ENCODE measurements at regions of chr15 and their contacts with region 1.

Region 1: GRCh38 chr15:58770857-58771620 is at the start of gene MINDY2:
- DNase-seq: peak; percentile 97
- ATAC-seq: peak; percentile 94
- H3K4me3 Mint-ChIP-seq: no peak within 1 kb of the TSS; the same call in 1 of the 2 replicates
- H3K27ac Mint-ChIP-seq: peak within 1 kb of the TSS; percentile 98
- H3K4me1 Mint-ChIP-seq: peaks cover 16% of the 10 kb centered on the region
- H3K27me3 Mint-ChIP-seq: no peaks in the 10 kb centered on the region
- CTCF ChIP-seq: no peak
- total RNA-seq, gene MINDY2: 27.0 to 29.9 TPM (median 29.6 TPM) in 3 replicates

Region 2: GRCh38 chr15:58227706-58228543 is 543.1 kb before region 1 on chr15:
- CTCF ChIA-PET with region 1: interaction called, 12 read pairs
- POLR2A ChIA-PET with region 1: no interaction called
- DNase-seq: peak; percentile 77
- ATAC-seq: peak; percentile 40; the same call in 1 of the 2 replicates
- H3K4me3 Mint-ChIP-seq: no peak overlapping the region
- H3K27ac Mint-ChIP-seq: no peak overlapping the region
- H3K4me1 Mint-ChIP-seq: peaks cover 45% of the 10 kb centered on the region
- H3K27me3 Mint-ChIP-seq: peaks cover 14% of the 10 kb centered on the region
- CTCF ChIP-seq: peak; percentile 78

Region 3: DNA sequence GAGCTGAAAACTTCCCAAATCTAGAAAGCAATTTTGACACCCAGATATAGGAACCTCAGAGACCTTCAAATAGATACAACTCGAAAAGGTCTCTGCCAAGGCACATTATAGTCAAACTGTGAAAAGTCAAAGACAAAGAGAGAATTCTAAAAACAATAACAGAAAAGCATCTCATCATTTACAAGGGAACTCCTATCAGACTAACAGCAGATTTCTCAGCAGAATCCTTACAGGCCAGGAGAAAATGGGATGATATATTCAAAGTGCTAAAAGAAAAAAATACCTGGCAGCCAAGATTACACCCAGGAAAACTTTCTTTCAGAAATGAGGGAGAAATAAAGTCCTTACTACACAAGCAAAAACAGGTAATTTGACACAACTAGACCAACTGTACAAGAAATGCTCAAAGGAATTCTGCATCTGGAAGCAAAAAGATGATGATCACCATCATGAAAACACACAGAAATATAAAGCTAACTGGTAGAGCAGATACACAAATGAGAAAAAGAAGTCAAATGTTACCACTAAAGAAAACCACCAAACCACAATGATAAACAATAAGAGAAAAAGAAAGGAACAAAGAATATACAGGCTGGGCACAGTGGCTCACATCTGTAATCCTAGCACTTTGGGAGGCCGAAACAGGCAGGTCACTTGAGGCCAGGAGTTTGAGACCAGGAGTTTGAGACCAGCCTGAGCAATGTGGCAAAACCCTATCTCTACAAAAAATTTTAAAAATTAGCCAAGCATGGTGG is 72.0 kb before region 1 on chr15:
- CTCF ChIA-PET with region 1: no interaction called
- POLR2A ChIA-PET with region 1: no interaction called
- DNase-seq: no peak
- ATAC-seq: no peak
- H3K4me3 Mint-ChIP-seq: no peak overlapping the region
- H3K27ac Mint-ChIP-seq: peak overlapping the region; percentile 37; the same call in 1 of the 2 replicates
- H3K4me1 Mint-ChIP-seq: peaks cover 31% of the 10 kb centered on the region
- H3K27me3 Mint-ChIP-seq: no peaks in the 10 kb centered on the region
- CTCF ChIP-seq: no peak

Region 4: GRCh38 chr15:58749532-58750337 is 21.3 kb before region 1 on chr15 and contains the start of gene ADAM10:
- CTCF ChIA-PET with region 1: interaction called, 20 read pairs
- POLR2A ChIA-PET with region 1: interaction called, 66 read pairs
- DNase-seq: peak; percentile 99
- ATAC-seq: peak; percentile 94
- H3K4me3 Mint-ChIP-seq: peak within 1 kb of the TSS; percentile 99
- H3K27ac Mint-ChIP-seq: peak within 1 kb of the TSS; percentile 98
- H3K4me1 Mint-ChIP-seq: peaks cover 31% of the 10 kb centered on the region
- H3K27me3 Mint-ChIP-seq: no peaks in the 10 kb centered on the region
- CTCF ChIP-seq: no peak
- total RNA-seq, gene ADAM10: 128 to 133 TPM (median 130 TPM) in 3 replicates

Region 5: GRCh38 chr15:58761010-58761388 is 10.0 kb before region 1 on chr15:
- CTCF ChIA-PET with region 1: interaction called, 12 read pairs
- POLR2A ChIA-PET with region 1: interaction called, 7 read pairs
- DNase-seq: no peak
- ATAC-seq: no peak
- H3K4me3 Mint-ChIP-seq: no peak overlapping the region
- H3K27ac Mint-ChIP-seq: no peak overlapping the region
- H3K4me1 Mint-ChIP-seq: 0 out of 2 replicates have a peak, but pooled peaks cover 2% of the 10 kb centered on the region
- H3K27me3 Mint-ChIP-seq: no peaks in the 10 kb centered on the region; the same call in 1 of the 2 replicates
- CTCF ChIP-seq: no peak

Region 6: GRCh38 chr15:58864602-58865424 is 93.8 kb after region 1 on chr15:
- CTCF ChIA-PET with region 1: interaction called, 17 read pairs
- POLR2A ChIA-PET with region 1: interaction called, 7 read pairs
- DNase-seq: peak; percentile 64
- ATAC-seq: peak; percentile 66
- H3K4me3 Mint-ChIP-seq: peak overlapping the region; percentile 61
- H3K27ac Mint-ChIP-seq: no peak overlapping the region
- H3K4me1 Mint-ChIP-seq: peaks cover 9% of the 10 kb centered on the region
- H3K27me3 Mint-ChIP-seq: peaks cover 15% of the 10 kb centered on the region
- CTCF ChIP-seq: no peak

Region 7: DNA sequence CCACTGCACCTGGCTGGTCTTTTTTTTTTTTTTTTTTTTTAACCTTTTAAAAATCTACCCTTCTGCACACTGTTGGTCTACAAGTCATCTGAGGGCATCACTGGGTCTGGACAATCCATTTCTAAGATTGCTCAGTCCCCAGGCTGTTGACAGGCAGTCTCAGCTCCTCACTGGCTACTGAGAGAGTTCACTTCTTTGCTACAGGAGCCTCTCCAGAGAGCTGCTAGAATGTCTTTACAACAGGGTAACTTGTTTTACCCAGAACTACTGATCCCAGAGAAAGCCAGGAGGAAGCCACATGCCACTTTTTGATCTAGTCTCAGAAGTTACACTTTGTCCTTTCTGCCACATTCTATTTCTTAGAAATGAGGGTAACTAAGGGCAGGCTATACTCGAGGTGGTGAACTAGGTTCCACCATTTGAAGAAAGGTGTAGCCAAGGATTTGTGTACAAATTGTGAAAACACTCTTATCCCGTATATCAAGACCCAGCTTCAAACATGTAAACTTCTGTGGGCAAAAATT is 328.2 kb after region 1 on chr15:
- CTCF ChIA-PET with region 1: no interaction called
- POLR2A ChIA-PET with region 1: no interaction called
- DNase-seq: no peak
- ATAC-seq: no peak
- H3K4me3 Mint-ChIP-seq: no peak overlapping the region
- H3K27ac Mint-ChIP-seq: peak overlapping the region; percentile 63
- H3K4me1 Mint-ChIP-seq: peaks cover 2% of the 10 kb centered on the region; the same call in 1 of the 2 replicates
- H3K27me3 Mint-ChIP-seq: no peaks in the 10 kb centered on the region
- CTCF ChIP-seq: no peak